ENCODE measurements at regions of chr2 and their contacts with region 1.

Region 1: GRCh38 chr2:138827426-138828054 is 47.4 kb upstream of the NXPH2 start:
- H3K4me3 ChIP-seq: no peak overlapping the region
- H3K27ac ChIP-seq: no peak overlapping the region
- H3K4me1 ChIP-seq: no peaks in the 10 kb centered on the region; the same call in 1 of the 2 replicates
- CTCF ChIP-seq: peak; percentile 39; the same call in 1 of the 2 replicates

Region 2: GRCh38 chr2:137865954-137866540 is 961.5 kb before region 1 on chr2:
- CTCF ChIA-PET with region 1: interaction called, 18 read pairs
- POLR2A ChIA-PET with region 1: no interaction called
- H3K4me3 ChIP-seq: no peak overlapping the region
- H3K27ac ChIP-seq: no peak overlapping the region
- H3K4me1 ChIP-seq: no peaks in the 10 kb centered on the region
- CTCF ChIP-seq: peak; percentile 43; the same call in 1 of the 2 replicates

Region 3: GRCh38 chr2:137897082-137897481 is 930.5 kb before region 1 on chr2:
- CTCF ChIA-PET with region 1: interaction called, 14 read pairs
- POLR2A ChIA-PET with region 1: no interaction called
- H3K4me3 ChIP-seq: no peak overlapping the region
- H3K27ac ChIP-seq: no peak overlapping the region
- H3K4me1 ChIP-seq: no peaks in the 10 kb centered on the region
- CTCF ChIP-seq: no peak

Region 4: GRCh38 chr2:138373993-138374408 is 453.5 kb before region 1 on chr2:
- CTCF ChIA-PET with region 1: interaction called, 11 read pairs
- POLR2A ChIA-PET with region 1: no interaction called
- H3K4me3 ChIP-seq: no peak overlapping the region
- H3K27ac ChIP-seq: no peak overlapping the region
- H3K4me1 ChIP-seq: no peaks in the 10 kb centered on the region
- CTCF ChIP-seq: no peak

Region 5: DNA sequence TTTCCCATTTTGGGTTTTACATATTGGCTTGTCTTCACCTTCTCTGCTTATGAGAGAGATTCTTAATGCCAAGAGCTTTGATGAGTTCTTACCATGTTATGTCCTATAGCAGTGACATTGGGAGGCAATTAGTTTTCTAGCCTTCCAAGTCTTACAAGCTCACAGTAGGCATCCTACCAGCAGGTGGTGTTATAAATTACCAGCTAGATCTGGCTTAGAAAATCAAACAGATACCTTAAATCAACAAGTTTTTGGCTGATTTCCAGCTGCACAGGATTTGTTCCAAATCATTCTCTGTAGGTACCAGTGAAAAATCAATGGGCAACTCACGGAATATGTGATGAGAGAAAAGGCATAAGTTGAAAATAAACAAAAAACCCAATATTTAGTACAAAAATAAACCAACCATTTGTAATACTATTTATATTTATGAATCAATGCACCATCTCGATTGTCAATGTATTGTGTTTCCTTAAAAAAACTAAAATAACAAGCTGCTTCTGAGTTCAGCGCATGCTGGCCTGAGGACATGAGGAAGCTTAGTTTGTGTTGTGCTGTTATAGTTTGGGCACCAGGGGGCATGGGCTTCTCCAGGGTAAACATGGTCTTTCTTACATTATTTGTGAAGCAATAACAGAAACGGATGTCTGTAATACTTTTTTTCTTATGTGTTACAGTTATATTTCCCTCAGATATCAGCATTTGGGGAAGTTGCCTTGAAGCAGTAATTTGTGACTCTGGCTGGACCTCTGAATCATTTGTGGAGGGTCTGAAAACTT is 13.2 kb before region 1 on chr2:
- CTCF ChIA-PET with region 1: interaction called, 25 read pairs
- POLR2A ChIA-PET with region 1: no interaction called
- H3K4me3 ChIP-seq: no peak overlapping the region
- H3K27ac ChIP-seq: no peak overlapping the region
- H3K4me1 ChIP-seq: peaks cover 4% of the 10 kb centered on the region; the same call in 1 of the 2 replicates
- CTCF ChIP-seq: no peak

Region 6: DNA sequence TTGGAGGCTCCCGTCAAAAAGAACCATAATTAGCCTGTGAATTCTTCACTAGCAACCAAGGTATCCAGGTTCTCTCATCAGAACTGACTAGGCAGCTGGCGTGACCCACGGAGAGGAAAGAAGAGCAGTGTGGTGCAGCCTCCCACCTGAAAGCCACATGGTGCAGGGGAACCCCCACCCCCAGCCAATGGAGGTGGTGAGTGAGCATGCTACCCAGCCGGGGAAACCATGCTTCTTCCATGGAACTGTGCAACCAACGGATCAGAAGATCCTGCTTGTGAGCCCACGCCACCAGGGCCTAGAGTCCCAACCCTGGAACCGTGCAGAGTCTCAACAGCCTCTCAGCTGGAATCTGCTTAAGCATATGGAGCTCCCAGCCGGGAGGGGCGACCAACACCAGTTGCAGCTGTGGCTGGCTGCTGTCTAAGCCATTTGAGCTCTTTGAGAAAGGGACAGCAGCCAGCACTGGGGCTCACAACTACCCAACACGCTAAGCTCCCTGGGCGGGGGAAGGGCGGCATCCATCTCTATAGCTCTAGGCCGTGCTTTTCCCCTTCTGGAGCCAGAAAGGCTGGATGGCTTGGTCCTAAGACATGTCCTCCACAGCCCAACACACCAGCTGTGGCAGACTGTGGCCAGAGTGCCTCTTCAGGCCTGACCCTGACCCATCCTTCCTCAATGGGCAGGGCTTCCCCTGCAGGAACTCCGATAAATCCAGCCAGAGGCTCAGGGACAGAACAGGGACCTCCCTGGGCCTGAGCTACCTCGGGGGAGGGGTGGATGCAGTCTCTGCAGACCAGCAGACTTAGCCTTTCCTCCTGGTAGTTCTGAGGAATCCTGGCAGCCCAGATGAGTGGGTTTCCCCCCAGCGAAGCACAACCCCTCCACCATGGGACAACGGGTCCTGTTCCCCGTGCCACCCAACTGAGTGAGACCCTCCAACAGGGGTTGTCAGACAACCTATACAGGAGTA is 104.0 kb after region 1 on chr2:
- CTCF ChIA-PET with region 1: no interaction called
- POLR2A ChIA-PET with region 1: no interaction called
- H3K4me3 ChIP-seq: no peak overlapping the region
- H3K27ac ChIP-seq: no peak overlapping the region
- H3K4me1 ChIP-seq: no peaks in the 10 kb centered on the region
- CTCF ChIP-seq: no peak

Region 7: GRCh38 chr2:139018252-139018651 is 190.7 kb after region 1 on chr2:
- CTCF ChIA-PET with region 1: no interaction called
- POLR2A ChIA-PET with region 1: no interaction called
- H3K4me3 ChIP-seq: no peak overlapping the region
- H3K27ac ChIP-seq: no peak overlapping the region
- H3K4me1 ChIP-seq: no peaks in the 10 kb centered on the region
- CTCF ChIP-seq: no peak